GM12878 (cell line): ENCODE measurements at regions of chr10 and their contacts with region 1.

Region 1: GRCh38 chr10:20768843-20769242 is 128.3 kb downstream of the NEBL start:
- DNase-seq: no peak
- ATAC-seq: peak; percentile 58
- H3K4me3 ChIP-seq: no peak overlapping the region
- H3K27ac ChIP-seq: no peak overlapping the region
- H3K4me1 ChIP-seq: no peaks in the 10 kb centered on the region
- H3K27me3 ChIP-seq: no peaks in the 10 kb centered on the region
- CTCF ChIP-seq: no peak; a peak in 1 of 6 replicates
- EP300 ChIP-seq: no peak
- POLR2A ChIP-seq: no peak
- RAD21 ChIP-seq: 0 out of 2 replicates have a peak, but pooled peaks have one; percentile 14

Region 2: GRCh38 chr10:19819419-19820033 is 949.3 kb before region 1 on chr10:
- CTCF ChIA-PET with region 1: interaction called, 6 read pairs
- POLR2A ChIA-PET with region 1: no interaction called
- RAD21 ChIA-PET with region 1: interaction called, 3 read pairs
- SMC1A ChIA-PET with region 1: interaction called, 7 read pairs
- in situ Hi-C with region 1: no loop called
- intact Hi-C with region 1: loop called (anchors 10 kb)
- DNase-seq: no peak
- ATAC-seq: peak; percentile 10; the same call in 1 of the 3 replicates
- H3K4me3 ChIP-seq: no peak overlapping the region
- H3K27ac ChIP-seq: no peak overlapping the region
- H3K4me1 ChIP-seq: no peaks in the 10 kb centered on the region
- H3K27me3 ChIP-seq: peaks cover 1 to 3% of the 10 kb centered on the region in 2 experiments; a peak in 3 of 4 replicates
- CTCF ChIP-seq: peak; percentile 46 to 72 (median 55); a peak in 5 of 6 replicates
- EP300 ChIP-seq: no peak
- POLR2A ChIP-seq: no peak
- RAD21 ChIP-seq: peak; percentile 62

Region 3: DNA sequence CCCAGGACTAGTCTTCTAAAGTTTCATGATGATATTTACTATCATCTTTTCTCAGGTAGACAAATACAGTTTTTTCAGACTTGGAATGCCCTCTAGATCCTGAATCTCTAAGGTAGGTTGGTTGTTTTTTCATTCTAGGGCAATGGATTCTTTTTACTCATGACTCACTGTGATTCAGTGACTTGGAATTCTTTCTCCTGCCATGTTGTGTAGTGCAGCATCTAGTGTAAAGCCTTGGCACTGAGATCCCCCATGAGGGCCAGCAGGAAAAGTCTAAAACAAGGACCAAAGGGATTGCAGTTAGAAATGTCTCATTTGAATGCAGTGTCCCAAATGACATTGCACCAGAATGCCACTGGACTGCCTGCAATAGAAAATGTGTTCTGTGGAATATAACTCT is 302.1 kb before region 1 on chr10:
- CTCF ChIA-PET with region 1: no interaction called
- POLR2A ChIA-PET with region 1: no interaction called
- RAD21 ChIA-PET with region 1: no interaction called
- SMC1A ChIA-PET with region 1: no interaction called
- in situ Hi-C with region 1: no loop called
- intact Hi-C with region 1: no loop called
- DNase-seq: no peak
- ATAC-seq: no peak
- H3K4me3 ChIP-seq: no peak overlapping the region
- H3K27ac ChIP-seq: no peak overlapping the region
- H3K4me1 ChIP-seq: no peaks in the 10 kb centered on the region
- H3K27me3 ChIP-seq: no peaks in the 10 kb centered on the region
- CTCF ChIP-seq: no peak
- EP300 ChIP-seq: no peak
- POLR2A ChIP-seq: no peak
- RAD21 ChIP-seq: no peak

Region 4: DNA sequence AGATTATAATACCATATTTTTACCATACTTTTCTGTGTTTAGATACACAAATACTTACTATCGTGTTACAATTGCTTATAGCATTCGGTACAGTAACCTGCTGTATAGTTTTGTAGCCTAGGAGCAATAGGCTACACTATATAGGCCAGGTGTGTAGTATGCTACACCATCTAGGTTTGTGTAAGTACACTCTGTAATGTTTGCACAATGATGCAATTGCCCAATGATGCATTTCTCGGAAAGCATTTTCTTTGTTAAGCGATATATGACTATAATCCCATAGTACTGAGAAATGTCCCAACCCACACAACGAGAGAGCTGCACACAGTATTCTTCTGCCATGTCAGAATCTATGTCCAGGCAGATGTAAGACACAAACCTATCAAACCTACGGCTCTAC is 31.7 kb before region 1 on chr10:
- CTCF ChIA-PET with region 1: no interaction called
- POLR2A ChIA-PET with region 1: no interaction called
- RAD21 ChIA-PET with region 1: no interaction called
- SMC1A ChIA-PET with region 1: no interaction called
- in situ Hi-C with region 1: no loop called
- intact Hi-C with region 1: no loop called
- DNase-seq: no peak
- ATAC-seq: no peak
- H3K4me3 ChIP-seq: no peak overlapping the region
- H3K27ac ChIP-seq: no peak overlapping the region
- H3K4me1 ChIP-seq: no peaks in the 10 kb centered on the region
- H3K27me3 ChIP-seq: no peaks in the 10 kb centered on the region
- CTCF ChIP-seq: no peak
- EP300 ChIP-seq: no peak
- POLR2A ChIP-seq: no peak
- RAD21 ChIP-seq: no peak